Common myeloid progenitor, CD34-positive (primary cell): ENCODE measurements at regions of chr2 and their contacts with region 1.

Region 1: GRCh38 chr2:152627351-152627957 is 89.8 kb downstream of the PRPF40A start:
- DNase-seq: peak; percentile 44 to 63 (median 51)
- H3K4me3 ChIP-seq: no peak overlapping the region
- H3K27ac ChIP-seq: no peak overlapping the region
- H3K4me1 ChIP-seq: no peaks in the 10 kb centered on the region
- H3K27me3 ChIP-seq: no peaks in the 10 kb centered on the region

Region 2: GRCh38 chr2:152189622-152190495 is 437.6 kb before region 1 on chr2:
- CTCF ChIA-PET with region 1: interaction called, 16 read pairs
- POLR2A ChIA-PET with region 1: no interaction called
- DNase-seq: peak; percentile 55 to 82 (median 80)
- H3K4me3 ChIP-seq: no peak overlapping the region
- H3K27ac ChIP-seq: no peak overlapping the region
- H3K4me1 ChIP-seq: no peaks in the 10 kb centered on the region
- H3K27me3 ChIP-seq: no peaks in the 10 kb centered on the region

Region 3: GRCh38 chr2:152558158-152558984 is 69.1 kb before region 1 on chr2:
- CTCF ChIA-PET with region 1: interaction called, 18 read pairs
- POLR2A ChIA-PET with region 1: no interaction called
- DNase-seq: no peak
- H3K4me3 ChIP-seq: no peak overlapping the region
- H3K27ac ChIP-seq: no peak overlapping the region
- H3K4me1 ChIP-seq: no peaks in the 10 kb centered on the region
- H3K27me3 ChIP-seq: no peaks in the 10 kb centered on the region

Region 4: DNA sequence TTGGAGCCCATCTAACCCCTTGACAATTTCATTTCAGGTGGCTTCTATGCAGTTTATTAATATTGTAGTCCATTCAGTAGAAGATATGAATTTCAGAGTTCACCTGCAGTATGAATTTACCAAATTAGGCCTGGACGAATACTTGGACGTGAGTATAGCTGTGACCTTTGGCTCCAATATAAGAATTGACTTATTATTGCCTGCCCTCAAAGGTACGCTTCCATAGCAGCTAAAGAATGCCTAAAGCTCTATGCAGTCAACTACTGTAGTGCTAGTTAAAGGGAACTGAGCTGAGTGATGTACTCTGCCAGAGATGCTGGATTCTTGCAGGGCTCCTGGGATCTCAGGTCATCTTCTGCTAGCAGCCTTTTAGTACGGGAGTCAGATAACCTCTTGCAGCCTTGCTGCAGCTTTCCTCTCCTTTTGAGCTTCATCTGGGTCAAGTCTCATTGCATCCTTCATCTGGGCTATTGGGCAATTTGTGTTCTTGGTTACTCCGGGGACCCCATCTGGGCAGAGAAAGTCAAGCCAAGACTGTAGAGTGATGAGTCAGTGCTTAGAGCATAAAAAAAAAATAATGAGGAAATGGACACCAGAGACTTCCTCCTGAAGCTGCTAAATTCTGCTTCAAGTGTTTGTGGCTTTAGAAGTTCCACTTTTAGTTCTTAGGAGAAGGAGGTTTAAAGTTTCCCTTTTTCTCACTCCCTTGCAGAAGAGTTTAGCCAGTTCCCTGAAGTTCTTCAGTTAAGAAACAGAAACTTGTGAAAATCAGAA is 15.8 kb before region 1 on chr2:
- CTCF ChIA-PET with region 1: interaction called, 35 read pairs
- POLR2A ChIA-PET with region 1: no interaction called
- DNase-seq: peak; percentile 83 to 95 (median 92)
- H3K4me3 ChIP-seq: peak overlapping the region in 6 of 7 experiments; percentile 35 to 63 (median 47)
- H3K27ac ChIP-seq: no peak overlapping the region
- H3K4me1 ChIP-seq: peaks cover 16 to 36% (median 20%) of the 10 kb centered on the region in 4 experiments
- H3K27me3 ChIP-seq: no peaks in the 10 kb centered on the region

Region 5: GRCh38 chr2:152646264-152646663 is 18.8 kb after region 1 on chr2:
- CTCF ChIA-PET with region 1: no interaction called
- POLR2A ChIA-PET with region 1: no interaction called
- DNase-seq: no peak
- H3K4me3 ChIP-seq: no peak overlapping the region
- H3K27ac ChIP-seq: no peak overlapping the region
- H3K4me1 ChIP-seq: no peaks in the 10 kb centered on the region
- H3K27me3 ChIP-seq: no peaks in the 10 kb centered on the region

Region 6: GRCh38 chr2:153005071-153005730 is 377.7 kb after region 1 on chr2:
- CTCF ChIA-PET with region 1: no interaction called
- POLR2A ChIA-PET with region 1: no interaction called
- DNase-seq: no peak
- H3K4me3 ChIP-seq: no peak overlapping the region
- H3K27ac ChIP-seq: no peak overlapping the region
- H3K4me1 ChIP-seq: no peaks in the 10 kb centered on the region
- H3K27me3 ChIP-seq: no peaks in the 10 kb centered on the region